Sciatic nerve (tissue), 2 donors: ENCODE measurements at regions of chr10 and their contacts with region 1.

Region 1: GRCh38 chr10:23376229-23376655 is 31.6 kb upstream of the C10orf67 start:
- DNase-seq: no peak
- ATAC-seq: peak; percentile 76

Region 2: GRCh38 chr10:23413629-23414089 is 37.4 kb after region 1 on chr10:
- intact Hi-C with region 1: loop called (anchors 5 kb)
- DNase-seq: no peak
- ATAC-seq: peak; percentile 41

Region 3: GRCh38 chr10:24589265-24589664 is 1213.0 kb after region 1 on chr10:
- intact Hi-C with region 1: no loop called
- DNase-seq: no peak
- ATAC-seq: no peak